Right ventricle myocardium inferior (tissue), 1 donor: ENCODE measurements at regions of chrX and their contacts with region 1.

Region 1: DNA sequence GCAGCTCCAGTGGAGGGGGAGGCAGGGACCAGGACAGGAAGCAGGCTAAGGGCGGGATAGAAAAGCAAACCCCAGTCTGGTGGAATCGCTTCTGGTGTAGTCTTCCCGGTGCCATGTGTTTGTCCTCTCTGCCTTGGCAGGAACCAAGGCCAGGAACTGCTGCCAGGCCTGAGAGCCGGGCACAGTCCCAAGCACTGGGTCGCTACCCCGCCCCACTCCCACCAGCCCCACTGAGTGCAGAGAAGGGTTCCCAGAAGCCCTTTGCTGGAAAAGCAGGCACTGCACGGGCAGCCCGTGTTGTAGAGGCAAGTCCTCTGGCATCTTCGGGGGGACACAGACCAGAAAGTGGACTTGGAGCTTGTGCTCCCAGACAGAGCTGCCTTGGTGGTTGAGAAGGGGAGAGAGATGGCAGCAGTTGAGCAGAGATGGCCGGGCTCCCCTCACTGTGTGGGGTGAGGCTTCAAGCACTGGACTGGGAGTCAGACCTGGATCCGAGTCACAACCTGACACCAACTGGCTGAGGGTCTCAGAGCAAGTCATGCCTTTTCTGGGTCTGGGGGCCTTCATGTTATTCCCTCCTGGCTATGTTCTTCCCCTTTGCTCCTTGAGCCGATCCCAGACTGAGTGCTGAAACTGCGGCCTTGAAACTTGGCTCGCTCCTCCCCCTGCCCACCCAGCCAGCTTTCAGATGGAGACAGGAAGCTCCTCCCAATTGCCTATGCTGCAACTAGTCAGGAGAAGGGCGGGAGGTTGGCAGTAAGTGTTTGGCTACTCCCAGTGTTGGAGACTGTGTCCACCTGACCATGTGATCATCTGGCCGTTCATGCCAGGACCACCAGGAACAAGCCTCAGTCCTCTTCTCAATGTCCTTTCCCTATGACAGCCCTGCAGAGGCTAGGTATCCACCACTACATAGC is 59.7 kb upstream of the MTM1 start:
- DNase-seq: no peak
- ATAC-seq: peak; percentile 75

Region 2: DNA sequence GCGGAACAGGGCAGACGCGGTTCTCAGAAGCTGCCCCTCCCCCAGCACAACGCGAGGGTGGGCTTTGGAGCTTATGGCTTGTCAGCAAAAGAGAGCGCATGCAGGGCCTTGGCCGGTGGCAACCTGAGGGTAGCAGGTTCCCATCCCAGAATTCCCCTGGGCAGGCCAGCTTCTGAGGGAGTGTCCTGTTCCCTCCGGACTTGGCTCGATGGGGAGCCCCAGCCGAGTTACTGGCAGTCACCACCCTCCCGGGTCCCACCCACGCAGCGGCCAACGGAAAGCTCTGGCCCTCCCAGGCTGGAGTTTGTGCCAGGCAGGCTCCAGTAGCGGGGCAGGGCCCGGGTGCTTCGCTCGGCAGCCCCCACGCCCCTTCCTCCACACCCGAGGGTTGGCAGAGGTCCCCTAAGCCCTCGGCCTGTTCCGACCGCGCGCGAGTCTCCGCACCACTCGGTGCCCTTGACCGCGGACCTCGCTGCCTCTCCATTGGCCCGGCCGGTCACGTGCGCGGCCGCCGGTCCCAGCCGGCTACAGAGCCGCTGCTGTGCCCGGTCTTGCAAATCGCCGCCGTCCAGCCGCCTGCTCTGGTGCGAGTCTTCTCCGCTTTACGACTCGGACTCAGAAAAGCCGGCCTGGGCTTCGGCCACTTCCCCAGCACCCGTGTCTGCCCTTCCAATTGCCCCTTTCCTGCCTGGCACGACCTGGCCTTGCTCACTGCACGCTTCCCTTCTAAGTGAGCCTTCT is 38.8 kb after region 1 on chrX:
- intact Hi-C with region 1: loop called (anchors 2 kb)
- DNase-seq: peak; percentile 89
- ATAC-seq: peak; percentile 94